ENCODE measurements at regions of chr2 and their contacts with region 1.

Region 1: GRCh38 chr2:102366406-102367112 is 11.0 kb downstream of the IL18R1 start:
- DNase-seq: peak in 6 of 9 donors; percentile 12 to 46 (median 32)
- ATAC-seq: peak; percentile 37
- H3K4me3 ChIP-seq: peak overlapping the region; percentile 39
- H3K4me3 Mint-ChIP-seq: peak overlapping the region; percentile 53 to 79 (median 72)
- H3K27ac ChIP-seq: peak overlapping the region; percentile 56
- H3K27ac Mint-ChIP-seq: peak overlapping the region; percentile 77 to 95 (median 88)
- H3K4me1 ChIP-seq: peaks cover 25 to 40% of the 10 kb centered on the region in 2 donors
- H3K4me1 Mint-ChIP-seq: peaks cover 33 to 74% (median 51%) of the 10 kb centered on the region in 7 donors
- H3K27me3 ChIP-seq: no peaks in the 10 kb centered on the region
- H3K27me3 Mint-ChIP-seq: no peaks in the 10 kb centered on the region

Region 2: GRCh38 chr2:102197389-102198137 is 169.0 kb before region 1 on chr2:
- CTCF ChIA-PET with region 1: no interaction called
- POLR2A ChIA-PET with region 1: no interaction called
- intact Hi-C with region 1: no loop called
- DNase-seq: no peak
- ATAC-seq: no peak
- H3K4me3 ChIP-seq: no peak overlapping the region
- H3K4me3 Mint-ChIP-seq: no peak overlapping the region
- H3K27ac ChIP-seq: no peak overlapping the region
- H3K27ac Mint-ChIP-seq: no peak overlapping the region
- H3K4me1 ChIP-seq: peaks cover 0 to 3% of the 10 kb centered on the region in 2 donors
- H3K4me1 Mint-ChIP-seq: peaks cover 0 to 5% (median 3%) of the 10 kb centered on the region in 7 donors
- H3K27me3 ChIP-seq: no peaks in the 10 kb centered on the region
- H3K27me3 Mint-ChIP-seq: peaks cover 11 to 28% (median 20%) of the 10 kb centered on the region in 5 donors

Region 3: DNA sequence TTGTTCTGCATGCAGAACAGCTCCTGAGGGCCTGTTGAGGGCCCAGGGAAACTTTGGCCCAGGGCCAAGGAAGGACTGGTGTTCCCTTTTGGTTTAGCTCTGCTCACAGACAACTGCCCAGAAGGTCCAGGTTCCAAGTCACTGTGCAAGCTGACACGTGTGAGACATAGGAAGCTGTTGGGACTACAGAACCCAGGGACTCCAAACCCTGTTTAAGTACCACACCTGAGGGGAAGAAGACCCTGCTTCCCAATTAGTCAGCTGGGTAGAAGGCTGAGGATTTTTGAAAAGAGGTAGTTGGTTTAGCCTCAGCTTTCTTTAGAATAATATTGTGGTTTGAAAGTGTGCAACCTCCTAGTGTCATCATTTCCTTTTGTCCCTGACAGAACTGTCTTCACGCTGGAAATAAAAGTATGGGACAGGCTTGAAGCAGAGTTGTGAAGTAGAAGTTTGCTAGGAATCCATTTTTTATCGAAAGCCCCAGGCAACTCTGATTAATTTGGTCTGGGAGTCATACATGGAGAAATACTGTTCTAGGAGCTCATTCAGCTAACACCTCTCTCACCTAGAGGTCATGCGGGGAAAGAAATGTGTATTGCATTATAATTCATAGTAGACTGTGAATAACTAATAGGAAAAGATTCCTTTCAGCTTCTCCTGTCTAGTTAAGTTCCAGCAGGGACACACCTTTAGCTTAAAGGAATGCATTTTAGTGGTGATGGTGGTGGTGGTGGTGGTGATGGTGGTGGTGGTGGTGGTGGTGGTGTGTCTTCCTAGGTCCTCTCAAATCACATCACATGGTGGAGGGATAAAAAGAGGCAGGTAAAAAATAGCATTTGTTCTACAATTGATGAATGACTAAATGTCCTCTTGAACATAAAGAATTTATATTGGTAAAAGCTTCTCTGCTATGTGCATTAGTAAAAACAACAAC is 75.0 kb before region 1 on chr2:
- CTCF ChIA-PET with region 1: no interaction called
- POLR2A ChIA-PET with region 1: no interaction called
- intact Hi-C with region 1: no loop called
- DNase-seq: no peak
- ATAC-seq: peak; percentile 65
- H3K4me3 ChIP-seq: no peak overlapping the region
- H3K4me3 Mint-ChIP-seq: peak overlapping the region in 1 of 10 donors; percentile 70
- H3K27ac ChIP-seq: no peak overlapping the region
- H3K27ac Mint-ChIP-seq: peak overlapping the region in 1 of 9 donors; percentile 64
- H3K4me1 ChIP-seq: no peaks in the 10 kb centered on the region
- H3K4me1 Mint-ChIP-seq: peaks cover 0 to 44% (median 4%) of the 10 kb centered on the region in 7 donors
- H3K27me3 ChIP-seq: no peaks in the 10 kb centered on the region
- H3K27me3 Mint-ChIP-seq: peaks cover 0 to 17% (median 2%) of the 10 kb centered on the region in 5 donors

Region 4: GRCh38 chr2:102350137-102350793 is 16.3 kb before region 1 on chr2:
- CTCF ChIA-PET with region 1: no interaction called
- POLR2A ChIA-PET with region 1: no interaction called
- intact Hi-C with region 1: loop called in 1 of 2 experiments (anchors 2 kb)
- DNase-seq: no peak
- ATAC-seq: no peak
- H3K4me3 ChIP-seq: no peak overlapping the region
- H3K4me3 Mint-ChIP-seq: no peak overlapping the region
- H3K27ac ChIP-seq: no peak overlapping the region
- H3K27ac Mint-ChIP-seq: peak overlapping the region in 1 of 9 donors; percentile 3
- H3K4me1 ChIP-seq: no peaks in the 10 kb centered on the region
- H3K4me1 Mint-ChIP-seq: peaks cover 0 to 7% (median 4%) of the 10 kb centered on the region in 7 donors
- H3K27me3 ChIP-seq: no peaks in the 10 kb centered on the region
- H3K27me3 Mint-ChIP-seq: peaks cover 0 to 4% (median 0%) of the 10 kb centered on the region in 5 donors

Region 5: DNA sequence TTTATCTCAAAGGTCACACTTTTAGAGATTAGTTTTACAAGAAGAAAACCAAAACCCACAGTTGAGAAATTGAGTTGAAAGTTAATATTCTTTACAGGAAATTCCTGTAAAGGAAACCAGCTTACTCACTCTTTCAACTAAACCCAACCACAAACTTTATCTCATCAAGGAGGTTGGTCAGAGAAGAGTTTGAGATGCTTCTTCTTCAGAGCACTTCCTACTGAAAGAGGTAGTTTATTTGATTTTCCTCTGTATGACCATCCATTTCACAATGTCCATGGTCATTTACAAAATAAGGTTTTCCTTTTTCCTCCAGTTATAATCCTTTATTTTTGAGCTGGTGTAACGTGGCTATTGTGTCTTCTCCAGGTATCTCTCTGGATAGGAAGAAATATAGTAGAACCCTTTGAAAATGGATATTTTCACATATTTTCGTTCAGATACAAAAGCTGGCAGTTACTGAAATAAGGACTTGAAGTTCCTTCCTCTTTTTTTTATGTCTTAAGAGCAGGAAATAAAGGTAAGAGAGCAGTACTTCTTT is 51.9 kb after region 1 on chr2:
- CTCF ChIA-PET with region 1: no interaction called
- POLR2A ChIA-PET with region 1: no interaction called
- intact Hi-C with region 1: loop called (anchors 1 to 2 kb)
- DNase-seq: peak in 6 of 9 donors; percentile 24 to 59 (median 49)
- ATAC-seq: peak; percentile 85
- H3K4me3 ChIP-seq: peak overlapping the region; percentile 18
- H3K4me3 Mint-ChIP-seq: peak overlapping the region; percentile 38 to 87 (median 74)
- H3K27ac ChIP-seq: no peak overlapping the region
- H3K27ac Mint-ChIP-seq: peak overlapping the region in 7 of 9 donors; percentile 64 to 95 (median 78)
- H3K4me1 ChIP-seq: peaks cover 29 to 49% of the 10 kb centered on the region in 2 donors
- H3K4me1 Mint-ChIP-seq: peaks cover 27 to 67% (median 48%) of the 10 kb centered on the region in 7 donors
- H3K27me3 ChIP-seq: no peaks in the 10 kb centered on the region
- H3K27me3 Mint-ChIP-seq: no peaks in the 10 kb centered on the region

Measured in naive thymus-derived CD4-positive, alpha-beta T cell (primary cell).